Lower leg skin (tissue), 4 donors: ENCODE measurements at regions of chr18 and their contacts with region 1.

Region 1: GRCh38 chr18:39039828-39040227 is 1474.2 kb upstream of the CELF4 start:
- DNase-seq: no peak
- H3K4me3 ChIP-seq: no peak overlapping the region
- CTCF ChIP-seq: no peak
- POLR2A ChIP-seq: no peak

Region 2: GRCh38 chr18:37346048-37346447 is 1693.8 kb before region 1 on chr18:
- intact Hi-C with region 1: no loop called
- DNase-seq: no peak
- H3K4me3 ChIP-seq: no peak overlapping the region
- CTCF ChIP-seq: no peak
- POLR2A ChIP-seq: no peak

Region 3: GRCh38 chr18:38369772-38370690 is 669.8 kb before region 1 on chr18:
- intact Hi-C with region 1: no loop called
- DNase-seq: no peak
- H3K4me3 ChIP-seq: no peak overlapping the region
- CTCF ChIP-seq: no peak
- POLR2A ChIP-seq: no peak

Region 4: GRCh38 chr18:38654946-38655345 is 384.9 kb before region 1 on chr18:
- intact Hi-C with region 1: loop called (anchors 10 kb)
- DNase-seq: no peak
- H3K4me3 ChIP-seq: no peak overlapping the region
- CTCF ChIP-seq: no peak
- POLR2A ChIP-seq: no peak

Region 5: DNA sequence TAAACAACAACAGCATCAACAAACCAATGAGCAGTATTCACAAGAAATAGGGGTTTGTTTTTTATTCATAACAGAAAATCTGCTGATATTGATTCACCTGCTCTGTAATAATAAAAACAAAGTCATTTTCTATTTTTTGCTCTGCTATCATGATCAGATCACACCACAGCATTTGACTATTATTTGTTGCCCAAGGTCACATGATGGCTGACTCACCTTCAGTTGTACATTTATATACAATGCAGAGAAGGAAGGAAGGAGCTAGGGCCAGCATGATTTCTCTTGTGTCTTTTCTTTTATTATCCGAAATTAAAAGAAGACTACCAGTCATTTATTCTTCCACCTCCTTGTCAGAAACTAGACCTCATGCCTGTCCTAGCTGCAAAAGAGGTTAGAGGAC is 46.5 kb before region 1 on chr18:
- intact Hi-C with region 1: no loop called
- DNase-seq: no peak
- H3K4me3 ChIP-seq: no peak overlapping the region
- CTCF ChIP-seq: no peak
- POLR2A ChIP-seq: no peak

Region 6: DNA sequence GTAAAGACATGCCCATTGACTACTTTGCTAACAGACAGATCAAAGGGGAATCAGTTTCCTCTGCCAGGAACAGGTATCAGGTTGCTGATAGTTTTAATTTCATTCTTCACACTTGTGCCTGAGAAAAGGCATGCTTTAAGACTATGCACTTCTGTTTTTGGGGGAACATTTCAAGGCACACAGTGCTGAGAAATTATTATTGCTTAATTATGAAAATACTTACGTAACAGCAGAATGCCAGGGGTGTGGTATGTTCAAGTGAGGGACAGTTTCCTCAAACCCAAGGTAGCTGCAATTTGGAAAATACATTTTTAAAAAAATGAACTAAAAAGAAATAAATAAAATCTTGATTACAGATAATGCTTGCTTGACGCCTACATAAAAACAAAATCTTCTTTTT is 1169.1 kb after region 1 on chr18:
- intact Hi-C with region 1: no loop called
- DNase-seq: no peak
- H3K4me3 ChIP-seq: no peak overlapping the region
- CTCF ChIP-seq: no peak
- POLR2A ChIP-seq: no peak